ENCODE measurements at regions of chr14 and their contacts with region 1.

Region 1: GRCh38 chr14:73785873-73786695 is 65.5 kb upstream of the PTGR2 start:
- DNase-seq: peak; percentile 62 to 84 (median 64)
- H3K4me3 ChIP-seq: peak overlapping the region; percentile 89 to 90
- H3K4me3 Mint-ChIP-seq: peak overlapping the region; percentile 94 to 98 (median 96)
- H3K27ac ChIP-seq: peak overlapping the region; percentile 84
- H3K27ac Mint-ChIP-seq: peak overlapping the region; percentile 95 to 99 (median 97)
- H3K4me1 ChIP-seq: peaks cover 62% of the 10 kb centered on the region
- H3K4me1 Mint-ChIP-seq: peaks cover 53 to 72% (median 61%) of the 10 kb centered on the region in 4 donors
- H3K27me3 ChIP-seq: no peaks in the 10 kb centered on the region
- H3K27me3 Mint-ChIP-seq: no peaks in the 10 kb centered on the region

Region 2: DNA sequence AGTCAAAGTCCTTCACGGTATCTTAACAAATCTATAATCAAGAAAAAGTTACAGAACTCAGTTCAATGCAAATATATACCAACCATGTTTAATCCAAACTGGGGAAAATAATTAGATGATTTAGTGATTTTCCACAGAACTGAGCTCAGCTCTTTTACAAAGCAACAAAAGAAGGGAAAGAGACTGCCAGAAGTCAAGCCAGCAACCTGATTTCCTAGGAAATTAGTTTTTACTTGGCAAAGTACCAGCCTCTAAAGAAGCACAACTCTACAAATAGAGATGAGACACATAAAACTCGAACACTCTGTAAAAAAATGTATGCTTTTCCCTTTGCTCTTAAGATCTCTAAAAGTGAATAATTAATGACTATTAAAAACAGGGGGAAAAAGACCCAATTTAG is 347.1 kb before region 1 on chr14:
- CTCF ChIA-PET with region 1: no interaction called
- POLR2A ChIA-PET with region 1: no interaction called
- intact Hi-C with region 1: no loop called
- DNase-seq: no peak
- H3K4me3 ChIP-seq: no peak overlapping the region
- H3K4me3 Mint-ChIP-seq: no peak overlapping the region
- H3K27ac ChIP-seq: no peak overlapping the region
- H3K27ac Mint-ChIP-seq: no peak overlapping the region
- H3K4me1 ChIP-seq: no peaks in the 10 kb centered on the region
- H3K4me1 Mint-ChIP-seq: peaks cover 4 to 17% (median 10%) of the 10 kb centered on the region in 4 donors
- H3K27me3 ChIP-seq: no peaks in the 10 kb centered on the region
- H3K27me3 Mint-ChIP-seq: no peaks in the 10 kb centered on the region

Region 3: DNA sequence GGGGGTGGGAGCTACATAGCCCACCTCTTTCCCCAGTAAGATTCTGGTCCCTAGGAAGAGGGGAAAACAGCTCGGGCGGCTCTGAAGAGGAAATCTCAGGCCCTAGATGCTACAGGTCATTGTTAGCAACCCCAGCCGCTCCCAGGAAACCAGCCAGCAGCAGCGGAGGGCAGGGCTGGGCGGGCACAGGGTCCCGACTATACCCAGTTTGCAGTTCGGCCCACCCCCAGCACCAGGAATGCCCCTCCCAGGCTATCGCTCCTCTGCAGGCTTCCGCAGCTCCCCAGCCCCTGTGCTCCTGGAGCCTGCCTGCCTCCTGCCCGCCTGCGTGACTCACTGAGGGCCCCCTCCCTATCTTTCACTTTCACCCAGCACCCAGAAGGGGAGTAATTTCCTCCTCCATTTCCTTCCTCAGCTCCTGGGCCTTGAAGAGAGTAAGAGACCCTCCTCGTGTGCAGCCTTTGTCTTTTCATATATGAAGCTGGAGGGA is 44.7 kb before region 1 on chr14:
- CTCF ChIA-PET with region 1: interaction called, 9 read pairs
- POLR2A ChIA-PET with region 1: interaction called, 136 read pairs
- intact Hi-C with region 1: loop called (anchors 1 kb)
- DNase-seq: peak; percentile 56 to 87 (median 62)
- H3K4me3 ChIP-seq: peak overlapping the region; percentile 36 to 49
- H3K4me3 Mint-ChIP-seq: peak overlapping the region; percentile 79 to 90 (median 86)
- H3K27ac ChIP-seq: peak overlapping the region; percentile 66
- H3K27ac Mint-ChIP-seq: peak overlapping the region; percentile 93 to 98 (median 95)
- H3K4me1 ChIP-seq: peaks cover 77% of the 10 kb centered on the region
- H3K4me1 Mint-ChIP-seq: peaks cover 50 to 73% (median 61%) of the 10 kb centered on the region in 4 donors
- H3K27me3 ChIP-seq: no peaks in the 10 kb centered on the region
- H3K27me3 Mint-ChIP-seq: no peaks in the 10 kb centered on the region

Region 4: GRCh38 chr14:73753959-73754882 is 31.9 kb before region 1 on chr14:
- CTCF ChIA-PET with region 1: interaction called, 75 read pairs
- POLR2A ChIA-PET with region 1: interaction called, 465 read pairs
- intact Hi-C with region 1: no loop called
- DNase-seq: peak in 2 of 5 donors; percentile 35 to 69
- H3K4me3 ChIP-seq: peak overlapping the region; percentile 43 to 53
- H3K4me3 Mint-ChIP-seq: peak overlapping the region; percentile 82 to 94 (median 85)
- H3K27ac ChIP-seq: peak overlapping the region; percentile 98
- H3K27ac Mint-ChIP-seq: peak overlapping the region; percentile 92 to 99 (median 98)
- H3K4me1 ChIP-seq: peaks cover 92% of the 10 kb centered on the region
- H3K4me1 Mint-ChIP-seq: peaks cover 75 to 96% (median 86%) of the 10 kb centered on the region in 4 donors
- H3K27me3 ChIP-seq: no peaks in the 10 kb centered on the region
- H3K27me3 Mint-ChIP-seq: no peaks in the 10 kb centered on the region

Region 5: GRCh38 chr14:73771848-73772638 is 14.0 kb before region 1 on chr14:
- CTCF ChIA-PET with region 1: interaction called, 13 read pairs
- POLR2A ChIA-PET with region 1: interaction called, 148 read pairs
- intact Hi-C with region 1: loop called (anchors 2 kb)
- DNase-seq: peak; percentile 55 to 84 (median 61)
- H3K4me3 ChIP-seq: no peak overlapping the region
- H3K4me3 Mint-ChIP-seq: peak overlapping the region; percentile 55 to 88 (median 62)
- H3K27ac ChIP-seq: peak overlapping the region; percentile 50
- H3K27ac Mint-ChIP-seq: peak overlapping the region; percentile 83 to 96 (median 93)
- H3K4me1 ChIP-seq: peaks cover 78% of the 10 kb centered on the region
- H3K4me1 Mint-ChIP-seq: peaks cover 51 to 83% (median 66%) of the 10 kb centered on the region in 4 donors
- H3K27me3 ChIP-seq: no peaks in the 10 kb centered on the region
- H3K27me3 Mint-ChIP-seq: no peaks in the 10 kb centered on the region

Region 6: DNA sequence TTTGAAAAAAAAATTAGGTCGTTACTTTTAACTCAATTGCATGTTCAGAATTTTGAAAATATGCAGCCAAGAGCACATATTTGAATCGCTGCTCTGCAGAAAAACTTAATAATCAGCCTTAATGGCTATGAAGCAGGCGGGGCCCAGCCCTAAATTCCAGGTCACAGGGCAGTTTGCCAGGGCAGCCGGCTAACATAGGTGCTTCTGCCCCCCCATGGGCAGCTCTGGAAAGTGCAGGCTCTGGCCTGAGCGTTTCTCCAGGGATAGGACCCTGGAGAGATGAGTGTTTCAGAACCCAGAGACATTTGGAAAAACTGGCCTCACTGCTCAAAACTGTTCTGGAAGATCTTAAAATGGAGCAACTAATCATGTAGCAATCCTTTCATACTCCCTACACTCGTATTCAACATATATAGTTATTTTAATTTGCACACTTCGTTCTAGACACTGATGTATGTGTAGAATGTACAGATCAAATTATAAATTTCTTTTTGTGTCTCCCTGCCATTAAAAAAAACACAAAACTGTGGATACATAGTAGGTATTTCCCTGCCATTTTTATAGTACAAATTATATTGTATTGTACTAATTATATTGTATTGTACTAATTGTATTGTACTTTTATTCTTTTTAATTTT is 39.6 kb after region 1 on chr14:
- CTCF ChIA-PET with region 1: interaction called, 17 read pairs
- POLR2A ChIA-PET with region 1: interaction called, 3 read pairs
- intact Hi-C with region 1: loop called (anchors 2 kb)
- DNase-seq: peak; percentile 68 to 75 (median 74)
- H3K4me3 ChIP-seq: no peak overlapping the region
- H3K4me3 Mint-ChIP-seq: no peak overlapping the region
- H3K27ac ChIP-seq: no peak overlapping the region
- H3K27ac Mint-ChIP-seq: peak overlapping the region in 1 of 7 donors; percentile 42
- H3K4me1 ChIP-seq: peaks cover 13% of the 10 kb centered on the region
- H3K4me1 Mint-ChIP-seq: peaks cover 7 to 11% (median 10%) of the 10 kb centered on the region in 4 donors
- H3K27me3 ChIP-seq: no peaks in the 10 kb centered on the region
- H3K27me3 Mint-ChIP-seq: no peaks in the 10 kb centered on the region

Region 7: GRCh38 chr14:73851644-73852382 is 65.7 kb after region 1 on chr14 and contains the start of gene PTGR2:
- CTCF ChIA-PET with region 1: no interaction called
- POLR2A ChIA-PET with region 1: interaction called, 20 read pairs
- intact Hi-C with region 1: no loop called
- DNase-seq: peak; percentile 88 to 93 (median 91)
- H3K4me3 ChIP-seq: peak within 1 kb of the TSS; percentile 42 to 91
- H3K4me3 Mint-ChIP-seq: peak within 1 kb of the TSS; percentile 92 to 99 (median 94)
- H3K27ac ChIP-seq: peak within 1 kb of the TSS; percentile 66
- H3K27ac Mint-ChIP-seq: peak within 1 kb of the TSS; percentile 93 to 99 (median 98)
- H3K4me1 ChIP-seq: peaks cover 17% of the 10 kb centered on the region
- H3K4me1 Mint-ChIP-seq: peaks cover 9 to 24% (median 17%) of the 10 kb centered on the region in 4 donors
- H3K27me3 ChIP-seq: no peaks in the 10 kb centered on the region
- H3K27me3 Mint-ChIP-seq: no peaks in the 10 kb centered on the region
- total RNA-seq, gene PTGR2: 4.5 to 5.0 TPM

Region 8: DNA sequence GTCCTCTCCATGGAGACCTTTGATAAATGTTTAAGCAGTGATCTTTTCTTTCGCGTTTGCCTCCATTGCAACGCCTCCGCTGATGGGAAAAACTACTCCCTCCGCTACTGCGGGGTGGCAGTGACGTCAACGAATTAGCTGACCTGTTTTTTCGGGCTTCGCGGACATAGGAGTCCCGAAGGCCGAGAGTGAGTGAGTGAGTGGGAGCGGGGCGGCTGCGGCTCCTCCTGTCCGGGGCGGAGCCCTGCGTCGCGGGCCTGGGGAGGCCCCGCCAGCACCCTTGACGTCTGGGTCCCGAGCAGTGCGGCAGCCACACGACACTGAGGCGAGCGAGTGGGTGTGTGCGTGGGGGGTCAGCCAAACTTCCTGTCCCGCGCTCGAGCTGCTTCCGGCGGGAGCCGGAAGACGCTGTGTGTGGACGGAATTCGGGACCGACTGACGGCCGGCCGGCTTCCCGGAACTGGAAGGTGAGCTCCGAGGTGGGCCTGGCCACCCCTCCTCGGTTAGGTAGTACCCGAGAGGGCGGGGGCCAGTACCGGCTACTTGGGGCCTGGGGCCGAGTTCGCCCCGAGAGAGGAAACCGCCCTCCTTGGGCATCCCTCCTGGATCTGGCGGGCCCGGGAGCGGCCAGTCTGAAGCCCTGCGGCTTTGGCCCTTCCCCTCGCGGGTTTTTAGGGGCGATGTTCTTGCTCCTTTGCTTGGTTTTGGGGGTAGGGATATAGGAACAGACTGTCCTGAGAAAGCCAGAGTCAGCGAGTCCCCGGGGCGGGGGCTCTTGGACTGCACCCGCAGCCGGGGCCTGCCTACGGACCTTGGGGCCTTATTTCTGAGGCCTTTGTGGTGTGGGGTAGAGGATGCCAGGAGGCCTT is 100.6 kb after region 1 on chr14 and contains the start of gene ZNF410:
- CTCF ChIA-PET with region 1: no interaction called
- POLR2A ChIA-PET with region 1: interaction called, 15 read pairs
- intact Hi-C with region 1: no loop called
- DNase-seq: peak; percentile 84 to 90 (median 86)
- H3K4me3 ChIP-seq: peak within 1 kb of the TSS; percentile 89
- H3K4me3 Mint-ChIP-seq: peak within 1 kb of the TSS; percentile 89 to 99 (median 98)
- H3K27ac ChIP-seq: peak within 1 kb of the TSS; percentile 96
- H3K27ac Mint-ChIP-seq: peak within 1 kb of the TSS; percentile 85 to 100 (median 99)
- H3K4me1 ChIP-seq: peaks cover 43% of the 10 kb centered on the region
- H3K4me1 Mint-ChIP-seq: peaks cover 34 to 55% (median 42%) of the 10 kb centered on the region in 4 donors
- H3K27me3 ChIP-seq: no peaks in the 10 kb centered on the region
- H3K27me3 Mint-ChIP-seq: no peaks in the 10 kb centered on the region
- total RNA-seq, gene ZNF410: 46.2 to 47.3 TPM